Colonic mucosa (tissue), 4 donors: ENCODE measurements at regions of chr9 and their contacts with region 1.

Region 1: GRCh38 chr9:75265525-75265972 is 177.2 kb downstream of the OSTF1 start:
- DNase-seq: peak; percentile 71
- H3K4me3 ChIP-seq: no peak overlapping the region
- H3K27ac ChIP-seq: no peak overlapping the region
- H3K4me1 ChIP-seq: no peaks in the 10 kb centered on the region
- H3K27me3 ChIP-seq: no peaks in the 10 kb centered on the region
- CTCF ChIP-seq: peak; percentile 90

Region 2: GRCh38 chr9:75855509-75855908 is 590.0 kb after region 1 on chr9:
- intact Hi-C with region 1: loop called (anchors 5 kb)
- DNase-seq: peak; percentile 46
- H3K4me3 ChIP-seq: no peak overlapping the region
- H3K27ac ChIP-seq: no peak overlapping the region
- H3K4me1 ChIP-seq: no peaks in the 10 kb centered on the region
- H3K27me3 ChIP-seq: no peaks in the 10 kb centered on the region
- CTCF ChIP-seq: peak; percentile 20

Region 3: DNA sequence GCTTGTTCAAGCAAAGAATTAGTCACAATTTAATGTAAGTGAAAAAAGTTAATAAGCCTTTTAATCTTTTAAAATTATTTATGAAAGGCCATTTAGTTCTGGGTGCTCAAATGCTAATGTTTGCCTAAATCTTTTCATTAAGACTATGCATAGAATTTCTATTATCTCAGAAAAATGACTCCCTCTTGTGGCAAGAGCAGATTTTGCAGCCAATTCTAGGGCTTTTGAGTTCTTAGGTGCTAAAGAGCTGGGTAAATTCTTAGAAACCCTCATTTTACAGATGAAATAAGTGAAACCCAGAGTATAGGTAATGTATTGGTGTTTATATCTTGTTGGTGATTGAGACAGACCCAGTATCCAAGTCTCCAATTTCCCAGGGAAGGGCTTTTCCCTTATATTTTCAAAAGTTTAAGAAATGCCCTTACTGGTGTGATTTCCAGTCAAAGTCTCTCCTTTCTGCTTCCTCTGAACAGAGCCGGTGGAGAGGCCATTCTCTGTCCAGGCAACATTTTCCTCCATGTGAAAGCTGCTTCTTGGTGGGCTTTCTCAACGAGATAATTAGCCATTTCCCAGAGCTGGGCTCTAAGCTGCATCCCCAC is 600.8 kb after region 1 on chr9:
- intact Hi-C with region 1: loop called (anchors 2 kb)
- DNase-seq: peak; percentile 75
- H3K4me3 ChIP-seq: no peak overlapping the region
- H3K27ac ChIP-seq: no peak overlapping the region
- H3K4me1 ChIP-seq: no peaks in the 10 kb centered on the region
- H3K27me3 ChIP-seq: no peaks in the 10 kb centered on the region
- CTCF ChIP-seq: peak; percentile 77

Region 4: GRCh38 chr9:76302947-76303940 is 1037.7 kb after region 1 on chr9:
- intact Hi-C with region 1: loop called (anchors 5 kb)
- DNase-seq: no peak
- H3K4me3 ChIP-seq: no peak overlapping the region
- H3K27ac ChIP-seq: no peak overlapping the region
- H3K4me1 ChIP-seq: no peaks in the 10 kb centered on the region
- H3K27me3 ChIP-seq: no peaks in the 10 kb centered on the region
- CTCF ChIP-seq: peak; percentile 59